Activated naive CD4-positive, alpha-beta T cell treated with anti-CD3 and anti-CD28 coated beads for 36 hours (primary cell): ENCODE measurements at regions of chr16 and their contacts with region 1.

Region 1: DNA sequence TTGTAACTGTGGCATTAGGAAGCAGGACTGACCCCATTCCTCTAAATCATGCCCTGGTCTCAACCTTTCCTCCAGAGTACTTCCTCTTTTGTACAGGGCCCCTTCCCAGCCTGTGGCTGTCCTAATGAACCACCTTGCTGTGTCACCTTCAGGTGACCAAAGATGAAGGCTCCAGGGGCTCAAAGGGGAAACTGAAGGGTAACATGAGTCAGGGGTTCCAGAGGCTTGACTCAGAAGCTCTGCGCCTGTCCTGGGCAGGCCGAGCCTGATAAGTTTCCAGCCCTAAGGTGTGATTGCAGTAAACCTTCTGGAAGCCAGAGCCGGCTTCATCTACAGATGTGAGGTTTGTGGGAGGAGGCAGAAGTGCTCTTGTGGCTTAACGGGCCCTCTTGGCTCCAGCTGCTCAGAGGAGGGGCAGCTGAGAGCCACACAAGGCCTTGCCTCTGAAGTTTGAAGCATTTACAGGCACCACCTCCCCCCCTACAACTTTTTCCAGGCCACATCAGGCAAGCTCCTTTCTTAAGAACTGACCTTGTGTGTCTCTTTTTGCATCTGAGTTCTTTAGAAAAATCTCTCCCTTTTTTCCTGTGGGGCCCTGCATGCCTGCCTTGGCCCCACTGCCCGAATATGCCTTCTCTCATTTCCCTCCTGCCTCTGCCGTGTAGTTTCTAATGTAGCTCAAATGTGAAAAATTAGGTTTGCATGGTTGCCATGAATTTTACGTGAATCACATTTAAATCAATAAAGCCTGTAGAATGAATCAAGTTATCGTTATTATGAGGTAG is 149.9 kb downstream of the CLEC16A start:
- DNase-seq: peak; percentile 88
- H3K4me3 Mint-ChIP-seq: peak overlapping the region; percentile 11
- H3K27ac Mint-ChIP-seq: peak overlapping the region; percentile 95
- H3K4me1 Mint-ChIP-seq: peaks cover 68% of the 10 kb centered on the region
- H3K27me3 Mint-ChIP-seq: no peaks in the 10 kb centered on the region

Region 2: DNA sequence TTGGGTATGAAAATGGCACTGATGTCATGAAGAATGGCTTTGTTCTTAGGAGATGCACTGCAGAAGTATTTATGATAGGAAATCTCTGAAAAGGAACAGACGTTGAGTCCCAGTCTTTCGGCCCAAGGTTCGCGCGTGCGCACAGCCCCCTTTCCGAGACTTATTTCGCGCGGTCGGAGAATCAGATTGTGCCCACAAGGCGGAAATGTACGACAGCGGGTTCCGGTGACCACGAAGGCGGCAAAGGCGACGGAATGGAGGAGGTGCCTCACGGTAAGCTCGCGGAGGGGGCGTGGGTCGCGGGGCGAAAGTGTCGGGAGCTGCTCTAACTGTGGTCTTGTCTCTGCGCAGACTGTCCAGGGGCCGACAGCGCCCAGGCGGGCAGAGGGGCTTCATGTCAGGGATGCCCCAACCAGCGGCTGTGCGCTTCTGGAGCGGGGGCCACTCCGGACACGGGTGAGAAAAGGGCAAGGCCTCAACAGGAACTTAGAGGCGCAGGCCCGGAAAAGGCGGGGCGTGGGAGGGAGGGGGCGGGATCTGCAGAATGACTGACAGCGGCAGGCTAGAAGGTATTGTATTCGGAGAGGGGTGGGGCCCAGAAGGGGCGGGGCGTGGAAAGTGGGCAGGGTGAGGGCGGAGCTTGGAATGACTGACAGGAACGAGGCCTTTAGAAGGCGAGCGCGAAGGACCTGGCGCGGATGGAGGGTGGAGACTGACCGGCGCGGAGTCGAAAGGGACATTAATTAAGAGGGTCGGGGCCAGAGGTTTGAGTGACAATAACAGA is 350.5 kb before region 1 on chr16 and contains the start of gene NUBP1:
- CTCF ChIA-PET with region 1: no interaction called
- intact Hi-C with region 1: loop called (anchors 10 kb)
- DNase-seq: peak; percentile 100
- H3K4me3 Mint-ChIP-seq: peak within 1 kb of the TSS; percentile 90
- H3K27ac Mint-ChIP-seq: peak within 1 kb of the TSS; percentile 100
- H3K4me1 Mint-ChIP-seq: peaks cover 26% of the 10 kb centered on the region
- H3K27me3 Mint-ChIP-seq: no peaks in the 10 kb centered on the region
- total RNA-seq, gene NUBP1: 22.3 to 23.0 TPM

Region 3: DNA sequence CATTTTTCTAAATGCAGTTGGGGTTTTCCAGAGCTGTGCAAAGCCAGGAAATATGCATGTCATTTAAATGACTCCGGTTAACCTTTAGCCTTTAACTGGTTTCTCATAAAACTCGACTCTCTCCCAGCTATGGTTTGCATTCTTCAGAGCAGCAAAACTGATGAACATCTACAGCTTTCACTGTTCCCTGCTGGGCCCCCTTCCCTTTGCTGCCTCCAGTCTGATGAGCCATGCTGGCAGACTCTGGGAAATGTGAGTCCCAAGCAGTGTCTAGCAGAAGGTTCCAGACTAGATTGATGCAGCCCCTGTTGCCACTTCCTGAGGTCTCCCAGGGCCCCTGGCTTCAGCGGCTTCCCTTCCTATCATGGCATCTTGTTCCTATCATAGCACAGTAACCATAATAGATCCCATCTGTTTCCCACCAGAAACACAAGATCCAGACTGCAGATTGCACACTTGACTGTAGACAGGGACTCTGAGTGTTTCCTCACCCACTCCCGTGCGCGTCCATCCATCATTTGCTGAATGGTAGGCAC is 14.5 kb before region 1 on chr16:
- CTCF ChIA-PET with region 1: interaction called, 8 read pairs
- intact Hi-C with region 1: loop called (anchors 1 kb)
- DNase-seq: peak; percentile 74
- H3K4me3 Mint-ChIP-seq: peak overlapping the region; percentile 36
- H3K27ac Mint-ChIP-seq: peak overlapping the region; percentile 96
- H3K4me1 Mint-ChIP-seq: peaks cover 61% of the 10 kb centered on the region
- H3K27me3 Mint-ChIP-seq: no peaks in the 10 kb centered on the region

Region 4: DNA sequence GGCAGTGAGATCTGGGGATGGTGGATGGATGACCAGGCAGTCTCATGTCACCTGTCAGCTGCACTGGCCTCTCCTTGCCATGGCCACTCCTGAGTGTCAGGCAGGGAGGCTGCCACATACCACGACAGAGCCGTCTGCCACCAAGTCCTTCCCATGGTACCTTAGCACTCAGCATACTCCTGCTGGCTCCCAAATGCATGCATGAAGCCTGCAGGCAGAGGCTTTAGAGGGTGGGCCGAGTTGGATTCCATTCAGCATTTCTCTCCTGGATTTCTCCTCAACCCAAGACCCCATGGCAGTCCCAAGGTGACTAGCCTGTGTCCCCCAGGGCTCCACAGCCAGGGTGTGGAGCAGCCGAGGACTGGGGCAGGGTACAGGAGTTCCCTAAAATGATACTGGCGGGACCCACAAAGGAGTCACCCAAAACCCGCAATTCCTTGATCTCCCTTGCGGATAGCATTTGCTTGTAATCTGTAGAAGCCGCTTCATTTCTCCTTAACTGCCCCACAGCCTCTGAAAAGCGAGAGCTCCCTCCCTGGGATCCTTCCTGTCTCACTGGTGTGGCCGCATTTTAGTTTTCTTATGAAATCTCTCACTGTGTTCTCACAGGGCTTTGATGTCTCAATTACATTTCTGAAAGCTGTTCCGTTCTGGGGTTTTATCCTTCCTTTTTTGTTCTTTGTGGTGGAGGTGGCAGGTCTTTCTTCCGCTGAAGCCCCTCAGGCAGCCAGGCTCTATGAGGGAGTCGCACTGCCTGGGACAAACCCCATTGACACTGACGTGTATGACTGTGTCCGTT is 20.3 kb after region 1 on chr16:
- CTCF ChIA-PET with region 1: interaction called, 5 read pairs
- intact Hi-C with region 1: loop called (anchors 1 kb)
- DNase-seq: peak; percentile 77
- H3K4me3 Mint-ChIP-seq: peak overlapping the region; percentile 23
- H3K27ac Mint-ChIP-seq: peak overlapping the region; percentile 83
- H3K4me1 Mint-ChIP-seq: peaks cover 33% of the 10 kb centered on the region
- H3K27me3 Mint-ChIP-seq: no peaks in the 10 kb centered on the region

Region 5: DNA sequence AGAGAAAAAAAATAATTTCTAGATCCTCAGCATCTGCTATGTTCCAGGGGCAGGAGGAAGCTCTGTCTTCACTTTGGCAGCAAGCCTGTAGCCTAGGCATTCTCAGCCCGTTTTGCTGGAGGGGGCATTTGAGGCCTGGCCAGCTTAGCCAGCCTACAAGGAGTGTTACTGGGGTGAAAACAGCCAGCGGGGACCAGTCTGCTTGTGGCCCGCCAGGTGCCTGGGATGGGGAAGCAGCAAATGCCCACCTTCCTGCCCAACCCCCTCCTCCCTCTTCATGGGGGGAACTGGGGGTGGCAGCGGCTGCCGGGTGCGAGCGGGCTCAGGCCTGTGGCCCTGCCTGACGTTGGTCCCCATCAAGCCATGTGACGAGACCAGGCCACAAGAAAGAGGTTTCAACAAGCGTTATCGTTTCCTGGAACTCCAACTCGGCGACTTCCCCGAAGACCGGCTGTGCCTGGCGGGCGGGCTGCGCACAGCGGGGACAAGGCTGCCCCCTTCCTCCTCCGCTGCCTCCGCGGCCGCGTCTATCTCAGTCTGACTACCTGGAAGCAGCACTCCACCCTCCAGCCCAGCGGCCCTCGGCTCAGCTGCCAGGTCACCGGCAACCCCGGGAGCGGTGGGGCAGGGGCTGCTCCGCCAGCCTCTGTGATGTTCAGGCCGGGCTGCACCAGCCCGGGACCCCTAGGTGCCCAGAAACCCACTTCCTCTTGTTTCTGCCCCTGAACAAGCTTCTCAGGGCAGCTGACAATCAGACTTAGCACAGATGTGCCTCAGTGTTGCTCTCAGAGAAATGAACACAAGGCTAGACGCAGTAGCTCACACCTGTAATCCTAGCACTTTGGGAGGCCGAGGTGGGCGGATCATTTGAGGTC is 138.8 kb after region 1 on chr16:
- CTCF ChIA-PET with region 1: no interaction called
- intact Hi-C with region 1: loop called (anchors 2 kb)
- DNase-seq: peak; percentile 97
- H3K4me3 Mint-ChIP-seq: peak overlapping the region; percentile 57
- H3K27ac Mint-ChIP-seq: peak overlapping the region; percentile 99
- H3K4me1 Mint-ChIP-seq: peaks cover 55% of the 10 kb centered on the region
- H3K27me3 Mint-ChIP-seq: no peaks in the 10 kb centered on the region